ENCODE measurements at regions of chr7 and their contacts with region 1.

Region 1: GRCh38 chr7:134690016-134690415 is 43.4 kb downstream of the BPGM start:
- DNase-seq: no peak
- ATAC-seq: peak; percentile 89

Region 2: DNA sequence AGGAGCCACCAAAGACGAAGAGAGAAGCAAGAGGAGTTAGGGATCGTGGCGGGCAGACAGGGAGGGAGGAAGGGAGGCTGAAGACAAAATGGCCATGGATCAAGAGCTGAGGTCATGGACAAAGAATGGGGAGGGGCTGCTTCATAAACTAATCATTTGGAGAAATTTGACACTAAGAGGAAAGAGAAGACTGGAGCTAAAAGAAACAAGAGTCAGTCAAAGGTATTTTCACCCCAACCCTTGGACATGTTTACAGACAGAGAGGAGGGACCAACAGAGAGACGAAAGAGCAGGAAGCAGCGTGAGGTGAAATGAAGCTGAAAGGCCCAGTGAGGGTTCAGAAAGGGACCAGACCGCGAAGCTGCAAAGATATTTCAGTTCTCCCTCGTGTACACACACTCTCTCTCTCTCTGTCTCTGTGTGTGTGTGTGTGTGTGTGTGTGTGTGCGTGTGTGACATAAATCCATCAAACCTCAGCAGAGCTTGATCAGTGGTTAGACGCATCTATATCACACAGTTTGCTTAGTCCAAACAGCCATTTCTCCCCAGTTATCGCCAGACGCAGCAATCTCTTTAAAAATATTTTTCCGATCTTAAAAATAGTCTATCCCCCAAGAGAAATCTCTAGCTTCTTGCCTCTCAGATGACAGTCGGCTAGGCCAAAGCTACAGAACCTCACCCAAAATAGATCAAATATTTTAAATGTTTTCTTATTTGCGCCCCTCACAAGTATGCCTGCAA is 76.9 kb after region 1 on chr7:
- intact Hi-C with region 1: no loop called
- DNase-seq: no peak
- ATAC-seq: peak; percentile 56

Region 3: DNA sequence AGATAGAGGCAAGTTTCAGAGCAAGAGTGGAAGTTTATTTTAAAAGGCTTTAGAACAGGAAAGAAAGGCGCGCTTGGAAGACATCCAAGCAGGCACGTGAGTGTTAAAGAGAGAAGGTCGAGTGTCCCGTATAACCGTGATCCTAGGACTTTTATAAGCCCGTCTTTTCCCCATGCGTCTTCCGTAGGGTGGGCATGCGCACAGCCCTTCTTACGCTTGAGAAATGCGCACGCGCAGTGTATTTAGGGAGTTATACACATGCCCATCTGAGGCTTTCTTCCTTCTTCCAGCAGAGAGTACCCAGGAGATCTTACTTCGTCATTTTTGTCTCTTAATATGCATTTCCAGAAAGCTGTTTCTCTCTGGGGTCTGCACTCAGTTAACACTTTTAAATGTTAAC is 141.8 kb after region 1 on chr7:
- intact Hi-C with region 1: no loop called
- DNase-seq: peak; percentile 61
- ATAC-seq: peak; percentile 7

Region 4: GRCh38 chr7:134954197-134955082 is 264.4 kb after region 1 on chr7:
- intact Hi-C with region 1: loop called (anchors 5 kb)
- DNase-seq: no peak
- ATAC-seq: peak; percentile 24

Measured in left ventricle myocardium superior (tissue), 1 donor.